Activated B cell treated with CpG ODN at 0.5 μM for 24 hours (primary cell): ENCODE measurements at regions of chr6 and their contacts with region 1.

Region 1: GRCh38 chr6:30212865-30213666 is at the start of gene TRIM26:
- DNase-seq: peak; percentile 89
- ATAC-seq: peak; percentile 85
- H3K4me3 Mint-ChIP-seq: peak within 1 kb of the TSS; percentile 98
- H3K27ac Mint-ChIP-seq: peak within 1 kb of the TSS; percentile 99
- H3K4me1 Mint-ChIP-seq: peaks cover 61% of the 10 kb centered on the region
- H3K27me3 Mint-ChIP-seq: no peaks in the 10 kb centered on the region
- CTCF ChIP-seq: no peak
- total RNA-seq, gene TRIM26: 72.5 and 75.7 TPM in 2 replicates

Region 2: GRCh38 chr6:30066577-30067459 is 146.2 kb before region 1 on chr6 and contains the start of gene PPP1R11:
- CTCF ChIA-PET with region 1: no interaction called
- POLR2A ChIA-PET with region 1: interaction called, 13 read pairs
- intact Hi-C with region 1: loop called (anchors 1 kb)
- DNase-seq: peak; percentile 95
- ATAC-seq: peak; percentile 96
- H3K4me3 Mint-ChIP-seq: peak within 1 kb of the TSS; percentile 98
- H3K27ac Mint-ChIP-seq: peak within 1 kb of the TSS; percentile 99
- H3K4me1 Mint-ChIP-seq: peaks cover 60% of the 10 kb centered on the region
- H3K27me3 Mint-ChIP-seq: peaks cover 17% of the 10 kb centered on the region
- CTCF ChIP-seq: no peak
- total RNA-seq, gene PPP1R11: 43.0 and 43.1 TPM in 2 replicates

Region 3: DNA sequence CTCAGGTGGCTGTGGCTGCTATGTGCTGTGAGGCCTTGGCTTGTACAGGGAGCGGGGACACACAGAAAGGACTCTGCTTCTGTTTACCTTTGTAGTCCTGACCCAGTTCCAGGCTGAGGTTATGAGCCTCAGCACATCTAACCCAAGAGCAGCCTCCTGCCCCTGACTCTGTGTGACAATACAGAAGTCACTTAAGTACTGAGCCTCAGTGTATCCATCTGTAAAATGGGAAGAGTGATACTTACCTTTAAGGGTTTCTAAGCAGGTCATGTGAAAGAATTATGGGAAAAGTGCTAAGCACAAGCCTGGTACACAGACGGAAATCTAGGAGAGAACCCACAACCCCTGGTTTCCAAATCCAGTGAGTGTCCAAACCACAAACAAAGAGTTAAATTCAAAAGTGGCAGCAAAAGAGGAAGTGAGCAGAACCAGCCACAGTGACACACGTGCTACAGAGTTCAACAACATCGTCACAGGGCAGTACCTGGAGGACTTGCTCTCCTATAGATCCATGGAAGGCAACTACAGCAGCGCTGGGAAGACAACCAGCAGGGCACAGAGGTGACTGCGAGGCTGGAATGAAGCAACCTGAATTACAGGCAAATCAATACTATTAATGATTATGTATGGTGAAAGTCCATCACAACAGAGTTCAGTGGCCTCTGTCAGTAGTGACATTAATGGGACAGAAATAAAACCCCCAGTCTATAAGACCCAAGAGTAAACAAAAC is 12.3 kb before region 1 on chr6:
- CTCF ChIA-PET with region 1: no interaction called
- POLR2A ChIA-PET with region 1: interaction called, 13 read pairs
- intact Hi-C with region 1: loop called (anchors 1 kb)
- DNase-seq: no peak
- ATAC-seq: peak; percentile 93
- H3K4me3 Mint-ChIP-seq: peak overlapping the region; percentile 48
- H3K27ac Mint-ChIP-seq: peak overlapping the region; percentile 83
- H3K4me1 Mint-ChIP-seq: peaks cover 44% of the 10 kb centered on the region
- H3K27me3 Mint-ChIP-seq: no peaks in the 10 kb centered on the region
- CTCF ChIP-seq: no peak

Region 4: DNA sequence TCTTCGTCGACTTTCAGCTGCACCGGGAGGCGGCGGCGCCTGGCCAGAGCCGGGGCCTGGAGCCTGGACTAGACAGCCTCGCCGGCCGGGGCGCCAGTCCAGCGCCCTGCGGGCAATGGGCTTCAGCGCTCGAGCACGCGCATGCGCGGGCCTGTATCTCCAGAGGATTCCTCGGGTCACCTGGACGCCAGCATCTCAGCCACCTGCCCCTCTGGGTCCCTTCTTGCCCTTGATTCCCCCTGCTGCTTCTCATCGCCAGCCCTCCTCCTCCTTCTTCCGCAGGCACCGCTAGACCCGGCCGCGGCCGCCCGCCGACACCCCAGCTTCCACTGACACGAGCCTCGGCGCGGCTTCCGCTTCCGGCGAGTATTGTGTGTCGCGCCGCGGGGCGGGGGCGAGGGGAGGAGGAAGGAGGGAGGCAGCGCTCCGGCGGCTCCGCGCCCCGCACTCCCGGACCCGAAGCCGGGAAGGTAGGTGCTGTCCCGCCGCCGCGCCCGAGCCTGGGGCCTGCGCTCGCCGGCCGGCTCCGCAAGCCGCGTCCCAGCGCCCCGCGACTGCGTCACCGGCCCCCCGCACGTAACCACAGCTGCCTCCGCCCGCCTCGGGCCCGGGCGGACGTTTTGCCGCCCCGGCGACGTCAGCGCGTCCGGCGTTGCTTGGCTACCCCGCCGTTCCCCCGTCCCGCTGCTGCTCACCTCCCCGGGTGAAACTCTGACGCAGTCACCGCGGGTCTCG is 113.6 kb after region 1 on chr6 and contains the start of gene TRIM39:
- CTCF ChIA-PET with region 1: interaction called, 4 read pairs
- POLR2A ChIA-PET with region 1: interaction called, 27 read pairs
- intact Hi-C with region 1: loop called (anchors 1 kb)
- DNase-seq: peak; percentile 90
- ATAC-seq: peak; percentile 68
- H3K4me3 Mint-ChIP-seq: peak within 1 kb of the TSS; percentile 96
- H3K27ac Mint-ChIP-seq: peak within 1 kb of the TSS; percentile 99
- H3K4me1 Mint-ChIP-seq: peaks cover 57% of the 10 kb centered on the region
- H3K27me3 Mint-ChIP-seq: no peaks in the 10 kb centered on the region
- CTCF ChIP-seq: no peak
- total RNA-seq, gene TRIM39: 21.6 and 22.0 TPM in 2 replicates

Region 5: DNA sequence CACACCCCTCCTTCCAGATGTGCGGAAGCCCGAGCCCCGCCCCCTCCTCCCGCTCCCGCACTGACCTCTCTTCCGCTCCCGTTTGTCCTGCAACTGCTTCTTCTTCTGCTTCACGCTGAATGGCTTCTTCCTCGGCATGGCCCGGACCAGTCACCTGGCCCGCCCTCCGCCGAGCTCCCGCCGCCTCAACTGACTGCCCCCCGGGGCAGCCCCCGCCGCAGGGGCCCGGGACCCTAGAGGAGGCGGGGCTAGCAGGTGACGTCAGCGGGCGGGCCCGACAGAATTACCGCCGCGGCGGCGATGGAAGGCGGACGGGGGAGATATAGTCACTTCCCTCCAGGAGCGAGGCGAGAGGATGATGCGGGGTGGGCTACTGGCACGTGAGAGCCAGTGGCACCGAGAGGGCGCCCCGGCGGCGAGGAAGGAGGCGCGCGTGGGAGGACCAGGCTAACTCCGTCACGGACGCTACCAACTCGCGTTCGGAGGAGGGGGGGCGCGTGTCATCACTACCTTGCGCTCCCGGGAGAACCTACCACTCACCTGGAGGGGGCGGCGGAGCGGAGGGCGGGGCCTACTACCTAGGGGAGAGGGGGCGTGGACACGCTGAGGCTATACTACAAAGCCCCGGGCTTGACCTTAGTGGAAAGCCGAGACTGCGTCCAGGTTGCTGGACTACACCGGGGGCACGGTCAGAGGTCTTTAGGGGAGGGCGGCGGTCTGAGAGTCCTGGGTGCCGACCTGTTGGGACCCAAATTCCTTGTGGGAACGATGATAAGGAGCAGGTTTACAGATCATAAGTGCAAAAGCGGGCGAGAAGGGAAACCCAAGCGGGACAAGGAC is 343.2 kb after region 1 on chr6 and contains the start of gene GNL1:
- CTCF ChIA-PET with region 1: no interaction called
- POLR2A ChIA-PET with region 1: no interaction called
- intact Hi-C with region 1: loop called (anchors 10 kb)
- DNase-seq: peak; percentile 99
- ATAC-seq: peak; percentile 89
- H3K4me3 Mint-ChIP-seq: peak within 1 kb of the TSS; percentile 94
- H3K27ac Mint-ChIP-seq: peak within 1 kb of the TSS; percentile 97
- H3K4me1 Mint-ChIP-seq: peaks cover 40% of the 10 kb centered on the region
- H3K27me3 Mint-ChIP-seq: no peaks in the 10 kb centered on the region
- CTCF ChIP-seq: no peak
- total RNA-seq, gene GNL1: 67.2 and 67.4 TPM in 2 replicates

Region 6: GRCh38 chr6:30781743-30782424 is 568.8 kb after region 1 on chr6:
- CTCF ChIA-PET with region 1: no interaction called
- POLR2A ChIA-PET with region 1: no interaction called
- intact Hi-C with region 1: no loop called
- DNase-seq: no peak
- ATAC-seq: peak; percentile 40
- H3K4me3 Mint-ChIP-seq: no peak overlapping the region
- H3K27ac Mint-ChIP-seq: peak overlapping the region; percentile 4
- H3K4me1 Mint-ChIP-seq: peaks cover 11% of the 10 kb centered on the region
- H3K27me3 Mint-ChIP-seq: peaks cover 19% of the 10 kb centered on the region
- CTCF ChIP-seq: no peak